Activated CD4-positive, alpha-beta T cell treated with anti-CD3 and anti-CD28 coated beads for 36 hours (primary cell): ENCODE measurements at regions of chr2 and their contacts with region 1.

Region 1: GRCh38 chr2:234550511-234551107 is 53.7 kb upstream of the ARL4C start:
- DNase-seq: peak; percentile 76
- ATAC-seq: peak; percentile 78
- H3K4me3 Mint-ChIP-seq: no peak overlapping the region
- H3K27ac Mint-ChIP-seq: no peak overlapping the region
- H3K4me1 Mint-ChIP-seq: peaks cover 3% of the 10 kb centered on the region
- H3K27me3 Mint-ChIP-seq: peaks cover 11% of the 10 kb centered on the region

Region 2: DNA sequence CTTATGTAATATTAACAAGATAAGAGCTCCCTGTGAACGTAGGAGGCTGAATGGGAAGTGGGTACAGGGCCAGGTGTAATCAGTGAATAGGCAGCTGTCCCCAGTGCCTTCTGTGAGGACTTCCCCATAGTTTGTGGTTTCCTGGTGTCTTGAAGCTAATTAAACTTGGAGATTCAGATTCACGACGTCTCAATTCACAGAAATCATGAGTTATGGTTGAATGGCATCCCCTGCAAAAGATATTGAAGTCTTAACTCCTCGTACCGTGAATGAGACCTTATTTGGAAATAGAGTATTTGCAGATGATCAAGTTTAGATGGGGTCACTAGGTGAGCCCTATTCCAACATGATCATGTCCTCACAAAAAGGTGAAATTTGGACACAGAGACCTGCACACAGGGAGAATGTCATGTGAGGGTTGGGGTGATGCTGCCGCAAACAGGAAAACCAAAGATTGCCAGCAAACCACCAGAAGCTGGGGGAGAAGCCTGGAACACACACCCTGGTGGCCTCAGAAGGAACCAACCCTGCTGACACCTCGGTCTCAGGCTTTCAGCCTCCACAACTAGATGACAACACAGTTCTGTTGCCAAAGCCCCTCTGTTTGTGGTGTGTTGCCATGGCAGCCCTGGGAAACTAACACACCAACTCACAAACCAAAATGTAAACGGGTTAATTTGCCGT is 66.9 kb before region 1 on chr2:
- CTCF ChIA-PET with region 1: no interaction called
- POLR2A ChIA-PET with region 1: no interaction called
- intact Hi-C with region 1: no loop called
- DNase-seq: peak; percentile 86
- ATAC-seq: peak; percentile 78
- H3K4me3 Mint-ChIP-seq: peak overlapping the region; percentile 39
- H3K27ac Mint-ChIP-seq: peak overlapping the region; percentile 88
- H3K4me1 Mint-ChIP-seq: peaks cover 87% of the 10 kb centered on the region
- H3K27me3 Mint-ChIP-seq: no peaks in the 10 kb centered on the region

Region 3: GRCh38 chr2:234951664-234952269 is 401.2 kb after region 1 on chr2 and contains the start of gene SH3BP4:
- CTCF ChIA-PET with region 1: no interaction called
- POLR2A ChIA-PET with region 1: no interaction called
- intact Hi-C with region 1: loop called in 1 of 2 experiments (anchors 1 kb)
- DNase-seq: peak; percentile 76
- ATAC-seq: peak; percentile 78
- H3K4me3 Mint-ChIP-seq: peak within 1 kb of the TSS; percentile 67
- H3K27ac Mint-ChIP-seq: no peak within 1 kb of the TSS
- H3K4me1 Mint-ChIP-seq: peaks cover 4% of the 10 kb centered on the region
- H3K27me3 Mint-ChIP-seq: peaks cover 59% of the 10 kb centered on the region
- total RNA-seq, gene SH3BP4: 0.21 to 0.32 TPM

Region 4: DNA sequence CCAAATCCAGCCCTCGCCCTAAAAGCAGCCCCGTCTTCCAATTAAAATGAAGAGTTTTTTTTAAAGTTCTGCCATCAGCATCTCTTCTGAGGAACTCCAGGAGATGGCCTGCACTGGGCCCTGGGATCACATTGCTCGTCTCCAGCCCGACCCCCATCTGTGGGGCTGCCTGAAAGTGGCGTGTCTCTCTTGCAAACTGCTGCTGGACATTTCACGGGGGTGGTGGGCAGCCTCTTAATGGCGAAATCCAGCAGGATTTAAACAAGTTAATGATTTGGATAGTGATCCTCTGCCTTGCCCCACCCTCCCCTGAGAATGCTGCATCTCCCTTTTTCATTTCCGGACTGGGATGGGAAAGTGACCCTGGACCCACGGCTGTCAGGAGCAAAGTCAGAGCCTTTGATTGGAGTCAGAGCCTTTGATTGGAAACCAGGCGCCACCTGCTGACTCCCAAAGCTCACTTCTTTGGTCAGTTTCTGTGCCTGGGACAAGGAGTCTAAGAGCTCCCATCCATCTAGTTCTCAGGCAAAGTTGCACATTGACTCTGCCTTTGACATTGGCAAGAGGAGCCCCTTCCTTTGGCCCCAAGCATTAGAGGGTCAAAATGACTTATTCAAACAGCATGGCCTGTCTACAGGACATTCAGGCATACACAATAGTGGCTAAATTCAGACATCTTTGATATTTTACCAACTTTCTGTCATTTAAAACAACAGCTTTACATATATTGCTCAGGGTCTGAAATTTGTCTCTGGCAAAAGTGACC is 556.4 kb after region 1 on chr2:
- CTCF ChIA-PET with region 1: interaction called, 3 read pairs
- POLR2A ChIA-PET with region 1: no interaction called
- intact Hi-C with region 1: loop called (anchors 2 kb)
- DNase-seq: peak; percentile 48
- ATAC-seq: no peak
- H3K4me3 Mint-ChIP-seq: no peak overlapping the region
- H3K27ac Mint-ChIP-seq: no peak overlapping the region
- H3K4me1 Mint-ChIP-seq: no peaks in the 10 kb centered on the region
- H3K27me3 Mint-ChIP-seq: peaks cover 6% of the 10 kb centered on the region

Region 5: GRCh38 chr2:235116885-235117492 is 566.4 kb after region 1 on chr2:
- CTCF ChIA-PET with region 1: interaction called, 11 read pairs
- POLR2A ChIA-PET with region 1: no interaction called
- intact Hi-C with region 1: loop called (anchors 1 kb)
- DNase-seq: no peak
- ATAC-seq: no peak
- H3K4me3 Mint-ChIP-seq: no peak overlapping the region
- H3K27ac Mint-ChIP-seq: no peak overlapping the region
- H3K4me1 Mint-ChIP-seq: no peaks in the 10 kb centered on the region
- H3K27me3 Mint-ChIP-seq: peaks cover 20% of the 10 kb centered on the region

Region 6: GRCh38 chr2:235595422-235596010 is 1044.9 kb after region 1 on chr2:
- CTCF ChIA-PET with region 1: no interaction called
- POLR2A ChIA-PET with region 1: no interaction called
- intact Hi-C with region 1: loop called (anchors 5 kb)
- DNase-seq: peak; percentile 61
- ATAC-seq: no peak
- H3K4me3 Mint-ChIP-seq: no peak overlapping the region
- H3K27ac Mint-ChIP-seq: no peak overlapping the region
- H3K4me1 Mint-ChIP-seq: no peaks in the 10 kb centered on the region
- H3K27me3 Mint-ChIP-seq: peaks cover 4% of the 10 kb centered on the region

Region 7: DNA sequence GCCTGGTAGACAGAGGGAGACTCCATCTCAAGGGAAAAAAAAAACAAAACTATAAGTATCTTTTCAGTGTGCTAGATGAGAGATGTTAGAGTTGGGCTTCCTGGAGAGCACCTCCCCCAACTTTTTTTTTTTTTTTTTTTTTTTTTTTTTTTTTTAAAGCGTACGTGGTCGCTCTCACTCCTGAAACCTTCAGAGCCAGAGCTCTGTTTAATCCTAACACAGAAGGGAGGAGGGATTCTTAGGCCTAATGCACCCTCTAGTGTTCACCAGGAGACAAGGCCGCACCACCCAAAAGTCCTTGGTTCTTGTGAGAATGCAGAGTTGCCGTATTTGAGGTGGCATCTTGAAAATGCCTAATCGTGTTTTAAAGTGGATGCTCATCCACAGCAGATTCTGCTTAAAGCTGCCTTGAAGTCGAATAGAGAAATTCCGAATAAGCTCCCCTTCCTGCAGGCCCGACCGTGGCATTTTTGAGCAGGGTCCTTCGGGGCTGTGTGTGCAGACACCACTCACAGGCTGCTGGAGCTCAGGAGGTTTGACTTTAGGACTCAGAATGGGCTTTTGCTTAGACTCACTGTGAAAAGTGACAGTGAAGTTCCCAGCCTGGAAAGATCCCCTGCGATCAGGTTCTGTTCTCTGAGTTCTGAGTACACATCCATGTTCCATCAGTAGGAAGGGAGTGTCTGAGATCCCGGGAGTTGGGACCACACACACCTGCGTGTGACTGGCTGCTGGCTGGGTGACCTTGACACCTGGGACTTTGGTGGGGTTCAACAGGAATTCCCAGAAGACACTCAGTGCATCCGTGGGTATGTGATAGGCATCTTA is 1195.9 kb after region 1 on chr2:
- CTCF ChIA-PET with region 1: no interaction called
- POLR2A ChIA-PET with region 1: no interaction called
- intact Hi-C with region 1: loop called in 1 of 2 experiments (anchors 1 kb)
- DNase-seq: peak; percentile 59
- ATAC-seq: peak; percentile 87
- H3K4me3 Mint-ChIP-seq: no peak overlapping the region
- H3K27ac Mint-ChIP-seq: no peak overlapping the region
- H3K4me1 Mint-ChIP-seq: no peaks in the 10 kb centered on the region
- H3K27me3 Mint-ChIP-seq: peaks cover 9% of the 10 kb centered on the region

Region 8: GRCh38 chr2:235773188-235773928 is 1222.7 kb after region 1 on chr2:
- CTCF ChIA-PET with region 1: no interaction called
- POLR2A ChIA-PET with region 1: no interaction called
- intact Hi-C with region 1: no loop called
- DNase-seq: no peak
- ATAC-seq: no peak
- H3K4me3 Mint-ChIP-seq: no peak overlapping the region
- H3K27ac Mint-ChIP-seq: no peak overlapping the region
- H3K4me1 Mint-ChIP-seq: no peaks in the 10 kb centered on the region
- H3K27me3 Mint-ChIP-seq: peaks cover 8% of the 10 kb centered on the region